ENCODE measurements at regions of chr1 and their contacts with region 1.

Region 1: GRCh38 chr1:39098546-39099250 is 72.5 kb downstream of the NDUFS5 start:
- DNase-seq: peak; percentile 74 to 76 (median 75)
- H3K4me3 ChIP-seq: no peak overlapping the region
- H3K27ac ChIP-seq: no peak overlapping the region
- H3K4me1 ChIP-seq: peaks cover 9 to 17% (median 15%) of the 10 kb centered on the region in 4 experiments
- H3K27me3 ChIP-seq: no peaks in the 10 kb centered on the region

Region 2: DNA sequence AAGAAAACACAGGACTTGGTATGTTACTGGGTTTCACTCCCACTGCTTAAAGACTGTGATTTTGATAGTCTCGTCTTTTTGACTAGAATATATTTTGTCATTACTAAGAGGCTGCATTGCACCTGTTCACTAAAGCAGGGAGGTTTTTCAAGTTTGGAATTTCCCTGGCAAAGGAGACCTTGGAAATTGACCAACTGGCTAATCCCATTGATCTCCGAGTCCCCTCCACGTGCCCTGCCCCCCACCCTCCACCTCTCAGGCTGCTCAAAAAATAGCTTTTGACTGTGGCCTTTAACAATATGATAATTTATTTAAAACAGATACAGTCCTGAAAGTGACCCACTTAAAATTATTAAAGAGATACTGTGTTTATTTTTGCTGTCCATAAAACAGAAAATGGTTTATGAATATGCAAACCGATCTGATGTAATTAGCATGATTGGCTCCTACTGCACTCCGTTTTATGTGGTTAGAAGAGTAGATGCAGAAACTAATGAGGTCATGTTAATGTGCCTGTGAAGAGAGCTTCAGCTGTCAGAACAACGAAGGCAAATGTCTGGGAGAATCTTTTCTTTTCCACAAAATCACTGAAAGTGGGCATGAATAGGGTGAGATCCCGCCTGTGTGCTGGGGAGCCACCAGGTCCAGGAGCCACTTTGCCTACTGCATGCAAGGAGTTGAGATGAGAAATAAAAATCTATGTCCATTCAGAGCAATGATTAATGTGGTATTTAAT is 600.6 kb before region 1 on chr1:
- CTCF ChIA-PET with region 1: no interaction called
- POLR2A ChIA-PET with region 1: no interaction called
- DNase-seq: no peak
- H3K4me3 ChIP-seq: no peak overlapping the region
- H3K27ac ChIP-seq: no peak overlapping the region
- H3K4me1 ChIP-seq: no peaks in the 10 kb centered on the region
- H3K27me3 ChIP-seq: peaks cover 2 to 44% (median 6%) of the 10 kb centered on the region in 5 experiments

Region 3: DNA sequence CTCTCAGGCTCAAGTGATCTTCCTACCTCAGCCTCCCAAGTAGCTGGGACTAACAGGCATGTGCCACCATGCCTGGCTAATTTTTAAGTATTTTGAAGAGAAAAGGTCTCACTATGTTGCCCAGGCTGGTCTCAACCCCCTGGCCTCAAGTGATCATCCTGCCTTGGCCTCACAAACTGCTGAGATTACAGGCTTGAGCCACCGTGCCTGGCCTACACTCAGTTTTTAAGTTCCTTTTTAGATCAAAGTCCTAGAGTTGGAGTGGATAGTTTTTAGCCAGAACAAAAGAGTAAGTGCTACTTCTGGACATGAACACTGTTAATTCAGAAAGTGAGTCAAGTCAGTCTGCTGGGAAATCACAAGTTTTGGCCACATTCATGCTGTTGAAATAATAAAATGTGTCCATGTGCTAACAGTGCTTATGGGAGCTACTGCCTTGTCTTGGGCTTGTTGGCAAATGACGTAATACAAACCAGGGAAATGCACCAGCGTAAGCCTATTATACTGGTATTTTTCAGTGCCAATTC is 11.7 kb after region 1 on chr1:
- CTCF ChIA-PET with region 1: interaction called, 11 read pairs
- POLR2A ChIA-PET with region 1: no interaction called
- DNase-seq: no peak
- H3K4me3 ChIP-seq: no peak overlapping the region
- H3K27ac ChIP-seq: no peak overlapping the region
- H3K4me1 ChIP-seq: peaks cover 0 to 26% (median 18%) of the 10 kb centered on the region in 4 experiments
- H3K27me3 ChIP-seq: no peaks in the 10 kb centered on the region

Region 4: DNA sequence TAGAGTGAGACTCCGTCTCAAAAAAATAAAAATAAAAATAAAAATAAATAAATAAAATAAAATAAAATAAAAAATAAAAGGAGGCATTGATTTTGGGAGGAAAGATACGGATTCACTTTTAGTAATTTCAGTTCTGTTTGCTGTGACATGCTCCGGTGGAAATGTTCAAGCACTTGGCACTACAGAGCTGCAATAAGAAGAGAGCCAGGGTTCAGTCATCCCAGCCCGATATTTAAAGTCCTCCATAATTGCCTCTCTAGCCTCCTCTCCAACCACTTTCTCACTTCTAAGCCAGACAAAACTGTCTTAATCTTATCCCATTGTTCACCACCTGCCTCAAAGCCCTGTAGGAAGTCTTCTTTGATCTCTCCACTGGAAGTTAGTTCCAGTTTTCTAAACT is 50.8 kb after region 1 on chr1:
- CTCF ChIA-PET with region 1: no interaction called
- POLR2A ChIA-PET with region 1: no interaction called
- DNase-seq: no peak
- H3K4me3 ChIP-seq: no peak overlapping the region
- H3K27ac ChIP-seq: no peak overlapping the region
- H3K4me1 ChIP-seq: peaks cover 0 to 7% (median under 1%) of the 10 kb centered on the region in 4 experiments
- H3K27me3 ChIP-seq: no peaks in the 10 kb centered on the region

Region 5: GRCh38 chr1:39183503-39184353 is 85.0 kb after region 1 on chr1:
- CTCF ChIA-PET with region 1: interaction called, 123 read pairs
- POLR2A ChIA-PET with region 1: no interaction called
- DNase-seq: peak; percentile 81 to 93 (median 91)
- H3K4me3 ChIP-seq: no peak overlapping the region
- H3K27ac ChIP-seq: peak overlapping the region; percentile 2 to 25
- H3K4me1 ChIP-seq: peaks cover 6 to 29% (median 20%) of the 10 kb centered on the region in 4 experiments
- H3K27me3 ChIP-seq: no peaks in the 10 kb centered on the region

Region 6: DNA sequence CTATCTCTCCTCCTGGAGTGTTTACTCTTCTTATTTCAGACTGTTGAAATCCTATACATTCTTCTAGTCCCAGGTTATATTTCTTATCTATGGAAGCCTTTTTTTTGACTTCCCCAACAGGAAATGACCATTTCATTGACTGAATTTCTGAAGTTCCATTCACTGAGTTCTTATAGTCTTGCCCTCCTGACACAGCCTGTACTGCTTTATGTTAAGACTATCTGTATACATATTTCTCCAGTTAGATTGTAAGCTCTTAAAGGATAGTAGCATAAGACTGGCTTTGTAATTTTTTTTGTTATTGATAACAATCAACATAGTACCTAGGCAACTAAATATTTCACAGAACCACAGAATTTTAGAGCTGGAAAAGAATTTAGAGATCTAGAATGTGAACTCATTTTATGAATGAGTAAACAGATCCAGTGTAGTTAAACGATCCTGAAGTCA is 90.9 kb after region 1 on chr1:
- CTCF ChIA-PET with region 1: interaction called, 123 read pairs
- POLR2A ChIA-PET with region 1: no interaction called
- DNase-seq: peak in 2 of 3 donors; percentile 28 to 41
- H3K4me3 ChIP-seq: no peak overlapping the region
- H3K27ac ChIP-seq: peak overlapping the region in 1 of 2 experiments; percentile 59
- H3K4me1 ChIP-seq: peaks cover 12 to 60% (median 43%) of the 10 kb centered on the region in 4 experiments
- H3K27me3 ChIP-seq: no peaks in the 10 kb centered on the region

Region 7: DNA sequence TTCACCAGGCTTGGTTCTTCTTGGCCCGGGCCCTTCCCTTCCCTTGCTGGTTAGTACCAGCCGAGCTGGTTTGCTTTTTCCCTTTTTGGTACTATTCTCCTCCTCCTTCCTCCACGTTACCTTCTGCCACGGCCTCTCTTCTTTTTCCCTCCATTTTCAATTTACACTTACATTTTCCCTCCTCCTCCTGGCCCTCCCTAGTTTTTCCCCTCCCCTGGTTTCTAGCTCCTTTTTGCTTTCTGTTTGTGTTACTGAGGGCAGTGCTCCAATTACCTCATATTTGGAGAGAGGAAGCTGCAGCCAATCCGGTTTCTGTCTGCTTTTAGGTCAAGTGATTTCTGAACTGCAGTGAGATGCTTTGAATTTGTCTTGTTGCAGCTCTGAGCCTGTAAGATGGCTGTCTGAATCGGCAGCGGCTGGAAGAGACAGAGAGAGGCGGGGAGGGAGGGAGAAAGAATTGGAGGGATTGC is 169.4 kb after region 1 on chr1:
- CTCF ChIA-PET with region 1: interaction called, 14 read pairs
- POLR2A ChIA-PET with region 1: no interaction called
- DNase-seq: peak; percentile 31 to 65 (median 57)
- H3K4me3 ChIP-seq: peak overlapping the region in 4 of 7 experiments; percentile 28 to 70 (median 50)
- H3K27ac ChIP-seq: peak overlapping the region; percentile 10 to 72
- H3K4me1 ChIP-seq: peaks cover 6 to 37% (median 13%) of the 10 kb centered on the region in 4 experiments
- H3K27me3 ChIP-seq: no peaks in the 10 kb centered on the region

Measured in common myeloid progenitor, CD34-positive (primary cell).